Heart right ventricle (tissue), 16 donors: ENCODE measurements at regions of chr20 and their contacts with region 1.

Region 1: DNA sequence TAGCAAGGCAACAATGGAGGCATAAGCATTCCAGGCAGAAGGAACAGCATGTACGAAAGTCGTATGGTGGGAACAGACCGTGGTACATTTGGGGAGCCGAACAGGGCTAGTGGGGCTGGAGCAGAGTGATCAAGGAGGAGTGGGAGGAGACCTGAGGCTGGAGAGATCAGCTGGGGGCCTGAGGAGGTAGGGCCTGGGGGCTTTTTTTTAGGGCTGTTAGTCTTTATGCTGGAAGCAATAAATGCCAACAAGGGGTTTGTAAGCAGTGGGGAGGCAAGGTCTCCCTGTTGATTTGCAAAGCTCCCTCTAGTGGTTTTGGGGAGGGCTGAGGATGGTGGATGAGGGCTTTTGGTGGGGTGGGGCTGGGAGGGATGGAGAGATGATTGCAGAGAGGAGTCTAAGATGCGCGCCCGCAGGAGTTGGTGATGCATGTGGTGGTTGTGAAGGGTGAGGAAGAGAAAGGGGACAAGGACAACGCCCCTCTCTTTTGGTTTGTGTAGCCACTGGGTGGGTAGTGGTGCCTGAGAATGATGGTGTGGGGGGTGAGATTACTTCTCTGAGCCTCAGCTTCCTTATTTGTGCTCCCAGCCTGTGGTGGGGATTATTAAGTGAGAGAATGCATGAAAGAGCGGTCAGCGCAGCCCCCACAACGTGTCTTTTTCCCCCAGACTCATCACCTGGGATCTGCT is 74.1 kb upstream of the TOX2 start:
- DNase-seq: no peak
- ATAC-seq: no peak
- H3K4me3 ChIP-seq: no peak overlapping the region
- H3K27ac ChIP-seq: no peak overlapping the region
- H3K4me1 ChIP-seq: peaks cover 0 to 14% (median 0%) of the 10 kb centered on the region in 9 donors
- H3K27me3 ChIP-seq: peaks cover 0 to 15% (median 4%) of the 10 kb centered on the region in 7 donors
- CTCF ChIP-seq: peak in 6 of 9 donors; percentile 11 to 38 (median 33)

Region 2: GRCh38 chr20:43728044-43728529 is 112.4 kb before region 1 on chr20:
- intact Hi-C with region 1: no loop called
- DNase-seq: no peak
- ATAC-seq: no peak
- H3K4me3 ChIP-seq: no peak overlapping the region
- H3K27ac ChIP-seq: no peak overlapping the region
- H3K4me1 ChIP-seq: peaks cover 0 to 7% (median 0%) of the 10 kb centered on the region in 9 donors
- H3K27me3 ChIP-seq: peaks cover 0 to 14% (median 4%) of the 10 kb centered on the region in 7 donors
- CTCF ChIP-seq: no peak

Region 3: DNA sequence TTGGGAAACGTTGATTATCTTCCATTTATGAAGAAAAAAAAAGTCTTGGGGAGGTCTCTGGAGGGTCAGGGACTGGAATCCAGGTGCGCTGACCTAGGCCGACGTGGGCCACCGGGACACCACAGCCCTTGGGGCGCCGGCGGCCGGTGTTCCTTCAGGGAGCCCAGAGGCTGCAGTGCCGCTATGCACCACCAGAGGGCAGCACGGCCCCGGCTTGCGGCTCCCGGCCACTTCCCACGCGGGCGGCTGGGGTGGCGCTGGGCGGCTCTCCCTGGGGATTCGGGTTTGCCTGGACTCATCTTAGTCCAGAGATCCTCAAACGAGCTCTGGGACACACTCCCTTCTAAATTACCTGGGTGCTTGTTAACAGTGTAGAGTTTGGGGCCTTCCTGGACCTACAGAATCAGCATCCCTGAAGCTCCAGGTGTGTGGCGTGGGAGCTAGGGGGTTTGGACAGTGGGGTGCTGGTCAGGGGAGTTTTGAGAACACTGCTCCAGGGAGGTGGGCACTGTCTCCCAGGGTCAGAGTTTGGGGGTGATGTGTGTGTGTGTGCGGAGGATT is 90.7 kb before region 1 on chr20:
- intact Hi-C with region 1: loop called in 2 of 10 experiments (anchors 5 to 10 kb)
- DNase-seq: peak; percentile 65 to 84
- ATAC-seq: peak; percentile 62 to 87 (median 84)
- H3K4me3 ChIP-seq: no peak overlapping the region
- H3K27ac ChIP-seq: no peak overlapping the region
- H3K4me1 ChIP-seq: peaks cover 0 to 52% (median 0%) of the 10 kb centered on the region in 9 donors
- H3K27me3 ChIP-seq: peaks cover 0 to 46% (median 19%) of the 10 kb centered on the region in 7 donors
- CTCF ChIP-seq: peak; percentile 99 to 100 (median 99)

Region 4: GRCh38 chr20:44001667-44002596 is 161.4 kb after region 1 on chr20:
- intact Hi-C with region 1: loop called in 1 of 10 experiments (anchors 10 kb)
- DNase-seq: no peak
- ATAC-seq: peak in 1 of 8 donors; percentile 41
- H3K4me3 ChIP-seq: no peak overlapping the region
- H3K27ac ChIP-seq: no peak overlapping the region
- H3K4me1 ChIP-seq: no peaks in the 10 kb centered on the region
- H3K27me3 ChIP-seq: no peaks in the 10 kb centered on the region
- CTCF ChIP-seq: no peak

Region 5: GRCh38 chr20:44069203-44070011 is 228.9 kb after region 1 on chr20:
- intact Hi-C with region 1: loop called in 1 of 10 experiments (anchors 10 kb)
- DNase-seq: no peak
- ATAC-seq: no peak
- H3K4me3 ChIP-seq: peak overlapping the region in 1 of 10 donors; percentile 27
- H3K27ac ChIP-seq: peak overlapping the region in 2 of 10 donors; percentile 40 to 86
- H3K4me1 ChIP-seq: peaks cover 0 to 48% (median 3%) of the 10 kb centered on the region in 9 donors
- H3K27me3 ChIP-seq: peaks cover 0 to 6% (median 0%) of the 10 kb centered on the region in 7 donors
- CTCF ChIP-seq: no peak

Region 6: DNA sequence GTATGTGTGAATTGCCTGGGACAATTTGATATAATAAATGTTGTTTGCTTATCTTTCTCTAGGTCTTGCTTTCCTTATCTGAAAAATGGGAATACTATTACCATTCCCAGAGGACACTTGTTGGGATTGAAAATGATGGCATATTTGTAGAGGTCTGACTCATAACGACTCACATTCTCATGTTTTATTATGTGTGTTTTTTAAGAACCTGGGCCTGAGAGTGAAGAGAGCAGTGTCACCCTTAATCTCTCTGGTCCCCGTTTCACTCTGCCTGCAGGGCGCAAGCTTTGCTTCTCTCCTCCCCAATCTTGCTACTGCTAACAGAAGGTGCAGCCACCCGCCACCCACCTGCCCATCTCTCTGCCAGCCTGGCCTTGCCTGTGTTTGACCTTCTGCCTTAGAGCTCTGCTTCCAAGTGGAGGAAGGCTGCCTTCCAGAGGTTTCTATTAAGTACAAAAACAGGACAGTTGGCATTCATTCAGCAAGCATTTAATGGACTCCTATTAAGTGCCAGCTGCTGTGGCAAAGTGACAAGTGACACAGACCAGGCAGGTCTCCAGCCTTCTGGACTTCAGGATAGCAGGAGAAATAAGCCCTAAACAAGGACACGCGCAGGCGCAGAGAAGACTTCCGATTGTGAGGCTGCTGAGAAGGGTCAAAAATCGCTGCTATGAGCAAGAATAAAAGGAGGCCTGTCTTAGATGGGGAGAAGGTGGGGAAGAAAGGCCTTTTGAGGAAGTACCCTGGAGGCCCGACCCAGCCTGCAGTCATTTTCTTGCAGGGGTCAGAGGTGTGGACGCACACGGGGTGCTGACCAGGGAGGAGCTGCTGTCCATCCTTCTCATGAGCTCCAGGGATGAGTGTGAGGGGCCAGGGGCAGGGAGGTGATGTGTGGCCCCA is 234.0 kb after region 1 on chr20:
- intact Hi-C with region 1: loop called in 2 of 10 experiments (anchors 5 to 10 kb)
- DNase-seq: peak; percentile 48 to 68
- ATAC-seq: peak; percentile 62 to 91 (median 84)
- H3K4me3 ChIP-seq: no peak overlapping the region
- H3K27ac ChIP-seq: peak overlapping the region in 8 of 10 donors; percentile 29 to 68 (median 58)
- H3K4me1 ChIP-seq: peaks cover 0 to 49% (median 5%) of the 10 kb centered on the region in 9 donors
- H3K27me3 ChIP-seq: no peaks in the 10 kb centered on the region
- CTCF ChIP-seq: no peak